Panc1 (cell line): ENCODE measurements at regions of chr16 and their contacts with region 1.

Region 1: GRCh38 chr16:75315539-75316306 is 64.3 kb upstream of the BCAR1 start:
- DNase-seq: no peak
- ATAC-seq: no peak
- H3K4me3 ChIP-seq: no peak overlapping the region
- H3K27ac ChIP-seq: no peak overlapping the region
- H3K4me1 ChIP-seq: no peaks in the 10 kb centered on the region; the same call in 1 of the 2 replicates
- H3K27me3 ChIP-seq: no peaks in the 10 kb centered on the region
- CTCF ChIP-seq: no peak

Region 2: DNA sequence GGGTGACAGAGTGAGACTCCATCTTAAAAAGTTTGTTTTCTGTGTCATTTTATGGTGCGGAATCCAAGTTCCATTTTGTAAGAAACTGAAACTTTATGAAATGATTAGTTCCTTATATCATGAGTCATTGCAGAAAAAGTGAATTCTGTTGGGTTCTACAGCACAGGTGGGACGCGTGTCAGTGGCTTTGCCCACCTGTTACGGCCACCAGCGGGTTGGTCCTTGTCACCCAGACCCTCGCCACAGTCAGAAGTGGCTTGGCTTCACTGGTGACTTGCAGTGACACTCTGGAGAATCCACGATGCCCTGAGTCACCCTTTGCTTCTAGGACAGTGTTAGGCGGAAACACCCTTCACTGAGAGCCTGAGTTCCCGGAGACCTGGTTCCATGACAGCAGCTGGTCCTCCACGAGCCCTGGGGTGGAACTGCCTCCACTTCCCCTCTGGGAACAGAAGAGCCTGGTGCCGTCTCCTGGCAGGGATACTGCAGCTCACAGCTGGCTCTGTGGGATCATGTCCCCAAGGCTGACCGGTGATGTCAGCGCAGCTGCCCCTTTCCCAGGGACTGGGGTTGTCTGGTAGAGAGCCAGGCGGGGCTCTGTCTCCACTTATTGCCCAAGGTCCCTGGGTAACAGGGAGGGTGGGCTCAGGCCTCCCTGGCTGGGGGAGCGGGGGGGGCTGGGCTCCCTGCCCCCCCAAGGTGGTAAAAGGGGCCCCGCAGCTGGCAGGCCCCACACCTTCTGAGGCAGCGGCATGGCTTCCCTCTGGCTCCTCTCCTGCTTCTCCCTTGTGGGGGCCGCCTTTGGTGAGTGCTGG is 97.3 kb before region 1 on chr16 and contains the start of gene CTRB1:
- CTCF ChIA-PET with region 1: no interaction called
- POLR2A ChIA-PET with region 1: interaction called, 11 read pairs
- in situ Hi-C with region 1: no loop called
- intact Hi-C with region 1: no loop called
- DNase-seq: no peak
- ATAC-seq: no peak
- H3K4me3 ChIP-seq: no peak within 1 kb of the TSS
- H3K27ac ChIP-seq: no peak within 1 kb of the TSS
- H3K4me1 ChIP-seq: no peaks in the 10 kb centered on the region
- H3K27me3 ChIP-seq: no peaks in the 10 kb centered on the region
- CTCF ChIP-seq: no peak
- total RNA-seq, gene CTRB1: 2.7 TPM